ENCODE measurements at regions of chr1 and their contacts with region 1.

Region 1: DNA sequence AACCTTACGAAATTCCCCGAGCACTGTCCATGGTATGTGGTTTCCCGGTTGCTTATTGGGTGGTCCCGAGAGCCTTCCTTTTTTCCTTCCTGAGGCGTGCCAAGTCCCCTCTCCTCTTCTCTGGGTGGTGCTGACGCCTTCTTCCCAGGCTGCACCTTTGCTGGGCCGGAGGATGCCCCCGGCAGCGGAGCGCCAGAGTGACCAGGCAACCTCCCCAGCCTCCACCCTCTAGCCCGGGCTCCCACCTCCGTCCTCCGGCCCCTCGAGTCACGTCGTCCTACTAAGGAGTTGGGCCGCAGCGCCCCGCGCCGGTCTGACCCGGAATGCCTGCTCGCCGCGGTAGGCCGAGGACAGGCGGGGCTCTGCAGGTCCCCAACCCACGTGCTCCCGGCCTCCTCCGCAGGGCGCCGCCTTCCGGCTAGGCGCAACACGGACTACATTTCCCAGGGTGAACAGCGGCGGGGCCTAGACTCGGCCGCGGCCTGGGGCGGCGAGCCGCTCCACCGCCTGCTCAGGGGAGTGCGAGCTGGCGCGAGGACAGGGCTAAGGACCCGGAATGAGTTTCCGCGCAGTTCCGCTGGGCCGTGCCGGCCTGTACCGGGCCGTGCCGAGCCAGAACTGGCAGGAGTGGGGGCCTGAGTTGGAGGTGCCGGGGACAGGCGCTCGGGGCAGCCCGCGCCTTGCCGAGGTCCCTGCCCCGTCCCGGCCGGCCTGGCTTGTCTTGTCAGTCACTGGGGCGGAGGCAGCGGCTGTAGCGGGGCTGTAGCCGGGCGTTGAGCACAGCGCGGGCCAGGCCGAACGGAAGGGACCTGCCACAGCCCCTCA is at the start of gene IPO13:
- DNase-seq: peak; percentile 96
- H3K4me3 ChIP-seq: peak within 1 kb of the TSS; percentile 89 to 97 (median 96)
- H3K27ac ChIP-seq: peak within 1 kb of the TSS; percentile 84
- H3K4me1 ChIP-seq: peaks cover 19% of the 10 kb centered on the region
- H3K27me3 ChIP-seq: no peaks in the 10 kb centered on the region
- CTCF ChIP-seq: peak; percentile 35 to 82
- total RNA-seq, gene IPO13: 35.5 to 53.0 TPM

Region 2: DNA sequence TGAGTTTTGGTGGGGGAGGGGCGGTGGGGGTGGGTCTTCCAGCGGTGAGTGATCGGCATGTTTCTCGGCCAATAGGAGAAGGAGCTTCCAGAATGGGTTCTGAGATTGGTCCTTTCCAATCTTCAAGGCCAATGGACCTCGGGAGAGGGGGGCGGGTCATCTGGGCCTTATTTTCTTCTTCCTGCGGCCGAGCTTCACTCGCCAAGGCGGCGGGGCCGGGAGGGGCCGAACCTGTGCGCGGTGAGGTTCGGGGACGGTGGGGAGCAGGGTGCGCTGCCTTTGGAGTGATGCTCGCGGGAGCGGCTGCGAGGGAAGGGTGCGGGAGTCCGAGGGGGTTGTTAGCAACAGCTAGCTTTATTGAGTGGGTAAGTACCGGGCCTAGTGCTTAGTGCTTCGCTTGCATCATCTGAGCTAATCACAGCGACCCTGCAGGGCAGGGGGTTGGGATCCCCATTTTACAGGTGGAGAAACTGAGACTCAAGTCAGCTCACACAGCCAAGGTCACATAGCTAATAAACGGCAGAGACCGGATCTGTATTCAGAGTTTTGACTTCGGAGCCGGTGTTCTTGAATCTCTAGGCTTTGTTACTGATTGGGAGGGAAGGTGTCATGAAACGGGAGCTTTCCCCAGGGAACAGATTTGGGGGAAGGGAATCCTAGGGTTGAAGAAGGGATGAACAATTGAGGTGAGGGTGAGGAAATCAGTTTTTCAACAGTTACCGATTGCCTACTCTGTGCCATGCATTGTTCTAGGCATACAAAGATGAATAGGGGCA is 295.9 kb before region 1 on chr1:
- CTCF ChIA-PET with region 1: no interaction called
- dilution Hi-C with region 1: no loop called
- in situ Hi-C with region 1: loop called in 1 of 2 experiments (anchors 25 kb)
- intact Hi-C with region 1: loop called (anchors 1 kb)
- DNase-seq: peak; percentile 95
- H3K4me3 ChIP-seq: peak overlapping the region; percentile 69 to 81 (median 75)
- H3K27ac ChIP-seq: peak overlapping the region; percentile 92
- H3K4me1 ChIP-seq: peaks cover 20% of the 10 kb centered on the region
- H3K27me3 ChIP-seq: no peaks in the 10 kb centered on the region
- CTCF ChIP-seq: no peak

Region 3: DNA sequence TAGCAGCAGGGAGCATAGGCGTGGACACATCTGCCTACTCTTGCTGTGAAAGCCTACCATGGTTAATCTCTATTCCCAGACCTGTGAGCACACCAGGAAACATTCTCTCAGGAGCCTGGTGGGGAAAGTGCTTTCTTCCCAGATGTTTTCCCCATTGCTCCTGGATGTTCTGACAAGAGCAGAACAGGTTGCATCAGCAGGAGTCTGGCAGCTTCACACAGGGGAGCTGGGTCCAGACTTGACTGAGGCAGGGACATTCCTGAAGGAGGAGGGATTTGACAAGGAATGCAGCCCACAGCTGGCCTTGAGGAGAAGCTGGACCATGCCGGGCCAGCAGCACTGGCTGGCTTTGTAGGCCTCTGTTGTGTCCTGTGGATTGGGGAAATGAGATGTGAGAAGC is 33.8 kb before region 1 on chr1:
- CTCF ChIA-PET with region 1: interaction called, 3 read pairs
- dilution Hi-C with region 1: no loop called
- in situ Hi-C with region 1: no loop called
- intact Hi-C with region 1: loop called (anchors 1 kb)
- DNase-seq: peak; percentile 83
- H3K4me3 ChIP-seq: peak overlapping the region in 1 of 3 experiments; percentile 9
- H3K27ac ChIP-seq: peak overlapping the region; percentile 75
- H3K4me1 ChIP-seq: peaks cover 41% of the 10 kb centered on the region
- H3K27me3 ChIP-seq: no peaks in the 10 kb centered on the region
- CTCF ChIP-seq: no peak

Region 4: DNA sequence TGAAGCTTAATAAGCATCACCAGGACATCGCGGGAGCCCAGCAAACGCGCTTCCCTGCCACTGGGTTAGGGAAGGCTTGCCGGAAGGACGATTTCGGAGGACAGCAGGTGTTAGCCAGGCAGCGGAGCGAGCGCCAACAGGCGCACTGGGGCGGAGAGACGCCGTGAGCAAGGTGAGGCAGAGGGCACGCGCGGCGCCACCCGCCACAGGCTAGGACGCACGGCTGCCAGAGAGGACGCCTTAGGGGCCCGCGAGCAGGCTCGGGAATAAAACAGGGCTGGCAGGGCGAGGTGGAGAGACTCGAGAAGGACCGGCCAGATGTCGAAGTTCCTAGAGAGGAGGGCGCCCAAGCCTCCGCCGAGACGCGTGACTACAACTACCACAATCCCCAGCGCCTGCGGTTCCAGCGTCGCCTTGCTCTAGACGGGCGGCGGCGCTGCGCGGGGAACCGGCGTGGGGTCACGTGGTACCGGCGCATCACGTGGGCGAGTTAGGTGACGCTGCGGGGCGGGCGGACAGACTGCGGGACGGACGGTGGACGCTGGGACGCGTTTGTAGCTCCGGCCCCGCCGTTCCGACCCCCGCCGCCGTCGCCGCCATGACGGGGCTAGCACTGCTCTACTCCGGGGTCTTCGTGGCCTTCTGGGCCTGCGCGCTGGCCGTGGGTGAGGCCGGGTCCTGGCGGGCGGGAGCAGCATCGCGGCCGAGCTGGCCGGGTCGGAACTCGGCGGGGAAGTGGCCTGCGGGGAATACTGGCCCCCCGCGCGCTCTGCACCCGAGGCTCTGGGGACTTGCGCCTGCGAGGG is 28.2 kb after region 1 on chr1 and contains the start of gene ATP6V0B:
- CTCF ChIA-PET with region 1: no interaction called
- dilution Hi-C with region 1: no loop called
- in situ Hi-C with region 1: no loop called
- intact Hi-C with region 1: loop called (anchors 1 kb)
- DNase-seq: peak; percentile 93
- H3K4me3 ChIP-seq: peak within 1 kb of the TSS; percentile 86 to 94 (median 89)
- H3K27ac ChIP-seq: peak within 1 kb of the TSS; percentile 64
- H3K4me1 ChIP-seq: peaks cover 39% of the 10 kb centered on the region
- H3K27me3 ChIP-seq: no peaks in the 10 kb centered on the region
- CTCF ChIP-seq: no peak
- total RNA-seq, gene ATP6V0B: 84.4 to 127 TPM

Region 5: DNA sequence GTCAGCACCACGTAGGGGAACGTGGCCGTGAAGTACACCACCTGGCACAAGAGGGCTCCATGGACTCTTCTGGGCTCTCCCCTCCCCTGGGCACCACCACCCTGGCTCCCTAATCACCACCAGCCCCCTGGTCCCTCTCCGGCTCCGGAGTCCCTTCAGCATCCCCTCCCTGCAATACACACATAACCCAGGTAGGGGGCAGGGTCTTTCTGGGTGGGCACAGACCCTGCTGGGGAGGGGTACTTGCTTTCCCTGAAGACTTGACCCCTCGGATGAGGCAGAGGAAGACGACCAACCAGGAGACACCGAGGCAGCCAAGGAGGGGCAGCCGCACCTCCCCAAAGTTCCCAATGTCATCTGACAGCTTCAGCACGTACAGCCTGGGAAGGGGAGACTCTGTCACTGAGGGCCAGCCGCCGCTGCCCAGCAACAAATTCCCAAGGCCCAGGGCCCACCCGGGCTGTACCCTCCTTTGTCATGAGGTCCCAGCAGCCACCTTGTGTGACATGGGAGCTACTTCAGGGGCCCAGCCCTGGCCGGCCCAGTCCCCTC is 56.2 kb after region 1 on chr1:
- CTCF ChIA-PET with region 1: no interaction called
- dilution Hi-C with region 1: no loop called
- in situ Hi-C with region 1: no loop called
- intact Hi-C with region 1: no loop called
- DNase-seq: no peak
- H3K4me3 ChIP-seq: no peak overlapping the region
- H3K27ac ChIP-seq: no peak overlapping the region
- H3K4me1 ChIP-seq: no peaks in the 10 kb centered on the region
- H3K27me3 ChIP-seq: no peaks in the 10 kb centered on the region
- CTCF ChIP-seq: peak in 1 of 2 donors; percentile 9